ENCODE measurements at regions of chr18 and their contacts with region 1.

Region 1: DNA sequence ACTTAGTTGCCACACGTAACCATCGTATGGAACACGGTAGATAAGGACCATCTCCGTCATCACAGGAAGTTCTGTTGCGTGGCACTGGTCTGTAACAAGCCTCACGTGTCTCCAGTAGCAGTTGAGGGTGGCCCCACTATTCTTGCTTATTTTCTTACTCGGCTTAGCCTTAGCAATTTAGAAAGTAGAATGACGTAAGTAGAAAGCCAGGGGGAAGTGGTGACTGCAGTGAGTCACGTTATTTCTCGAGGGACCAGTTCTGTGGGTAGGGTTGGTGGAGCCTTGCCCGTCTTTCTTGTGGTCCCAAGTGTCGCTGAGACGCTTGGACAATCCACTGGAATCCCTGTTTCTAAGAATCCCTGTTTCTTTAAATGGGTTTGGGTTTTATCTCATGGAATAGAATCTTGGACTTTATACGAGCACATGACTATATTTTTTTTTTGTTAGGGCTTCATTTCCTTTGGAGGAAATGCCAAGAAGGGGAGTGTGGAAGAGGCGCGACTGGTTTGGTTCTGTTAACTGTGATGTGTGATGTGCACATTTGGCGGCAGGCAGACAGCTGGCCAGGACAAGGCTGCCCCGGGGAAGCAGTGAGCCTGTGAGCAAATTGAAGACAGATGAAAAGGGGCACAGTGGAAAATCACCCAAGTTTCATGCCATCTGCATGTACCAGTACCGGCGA is 96.2 kb downstream of the CABLES1 start:
- DNase-seq: peak; percentile 83
- H3K4me3 Mint-ChIP-seq: peak overlapping the region; percentile 69
- H3K27ac Mint-ChIP-seq: peak overlapping the region; percentile 98
- H3K4me1 Mint-ChIP-seq: peaks cover 70% of the 10 kb centered on the region
- H3K27me3 Mint-ChIP-seq: no peaks in the 10 kb centered on the region

Region 2: GRCh38 chr18:23071285-23071684 is 160.2 kb before region 1 on chr18:
- intact Hi-C with region 1: loop called (anchors 10 kb)
- DNase-seq: peak; percentile 85
- H3K4me3 Mint-ChIP-seq: peak overlapping the region; percentile 27
- H3K27ac Mint-ChIP-seq: peak overlapping the region; percentile 95
- H3K4me1 Mint-ChIP-seq: peaks cover 55% of the 10 kb centered on the region
- H3K27me3 Mint-ChIP-seq: no peaks in the 10 kb centered on the region

Region 3: DNA sequence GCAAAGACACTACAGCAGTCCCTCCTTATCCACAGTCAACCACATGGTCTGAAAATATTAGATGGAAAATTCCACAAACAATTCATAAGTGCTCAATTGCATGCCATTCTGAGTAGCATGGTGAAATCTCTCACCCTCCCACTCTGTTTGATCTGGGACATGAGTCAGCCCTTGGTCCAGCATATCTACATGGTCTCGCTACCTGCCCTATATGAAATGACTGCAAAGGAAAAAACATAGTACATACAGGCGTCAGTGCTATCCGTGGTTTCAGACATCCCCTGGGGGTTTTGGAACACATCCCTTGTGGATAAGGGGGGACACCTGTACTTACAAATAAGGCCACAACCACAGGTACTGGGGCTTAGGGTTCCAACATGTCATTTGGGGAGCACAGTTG is 22.4 kb before region 1 on chr18:
- intact Hi-C with region 1: loop called (anchors 1 kb)
- DNase-seq: no peak
- H3K4me3 Mint-ChIP-seq: no peak overlapping the region
- H3K27ac Mint-ChIP-seq: peak overlapping the region; percentile 97
- H3K4me1 Mint-ChIP-seq: peaks cover 45% of the 10 kb centered on the region
- H3K27me3 Mint-ChIP-seq: no peaks in the 10 kb centered on the region

Region 4: DNA sequence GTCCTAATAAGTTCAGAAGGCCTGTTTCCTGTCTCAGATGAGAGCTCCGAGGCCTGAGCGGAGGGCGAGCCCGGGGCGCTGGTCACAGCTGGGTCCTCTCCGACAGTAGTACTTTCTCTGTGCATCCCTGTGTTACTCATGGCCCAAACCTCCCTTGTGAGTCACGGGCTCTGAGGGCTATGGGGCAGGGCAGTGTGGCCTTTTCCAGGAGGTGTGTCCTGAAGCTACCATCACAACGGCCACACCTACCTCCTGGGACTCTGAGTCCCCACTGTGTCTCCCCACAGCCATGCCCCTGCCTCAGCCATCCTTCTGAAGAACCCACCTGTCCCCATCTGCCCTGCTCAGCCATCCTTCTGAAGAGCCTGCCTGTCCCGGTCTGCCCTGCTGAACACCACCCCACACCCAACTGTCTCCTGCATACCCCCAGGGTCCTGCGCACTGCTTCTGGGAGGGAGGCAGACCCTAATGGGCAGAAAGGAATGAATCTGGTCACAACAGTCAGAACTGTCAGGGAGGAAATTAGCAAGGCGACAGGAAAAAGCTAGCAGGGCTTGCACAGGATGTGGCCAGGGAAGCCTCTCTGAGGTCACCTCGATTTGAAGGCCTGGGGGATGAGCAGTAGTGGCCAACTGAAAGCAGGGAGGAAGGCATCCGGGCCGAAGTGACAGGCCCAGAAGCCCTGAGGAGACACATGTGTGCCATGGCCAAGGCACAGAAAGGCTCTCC is 76.2 kb after region 1 on chr18:
- intact Hi-C with region 1: loop called (anchors 2 kb)
- DNase-seq: peak; percentile 36
- H3K4me3 Mint-ChIP-seq: no peak overlapping the region
- H3K27ac Mint-ChIP-seq: peak overlapping the region; percentile 78
- H3K4me1 Mint-ChIP-seq: peaks cover 43% of the 10 kb centered on the region
- H3K27me3 Mint-ChIP-seq: no peaks in the 10 kb centered on the region

Region 5: GRCh38 chr18:23356915-23357601 is 125.6 kb after region 1 on chr18:
- intact Hi-C with region 1: loop called (anchors 2 kb)
- DNase-seq: no peak
- H3K4me3 Mint-ChIP-seq: no peak overlapping the region
- H3K27ac Mint-ChIP-seq: no peak overlapping the region
- H3K4me1 Mint-ChIP-seq: peaks cover 39% of the 10 kb centered on the region
- H3K27me3 Mint-ChIP-seq: no peaks in the 10 kb centered on the region

Measured in activated T-helper 2 cell treated with anti-CD3 and anti-CD28 coated beads, Interferon-gamma antibody, Interleukin-2, Interleukin-4, amounts not matched to agents 10 μg/mL and 5 μg/mL and 100 μg/mL, durations not matched to agents 14 hours and 24 hours and 36 hours (primary cell).